Posterior vena cava (tissue), 2 donors: ENCODE measurements at regions of chrX and their contacts with region 1.

Region 1: GRCh38 chrX:77597090-77597489 is 149.9 kb downstream of the FGF16 start:
- DNase-seq: no peak

Region 2: DNA sequence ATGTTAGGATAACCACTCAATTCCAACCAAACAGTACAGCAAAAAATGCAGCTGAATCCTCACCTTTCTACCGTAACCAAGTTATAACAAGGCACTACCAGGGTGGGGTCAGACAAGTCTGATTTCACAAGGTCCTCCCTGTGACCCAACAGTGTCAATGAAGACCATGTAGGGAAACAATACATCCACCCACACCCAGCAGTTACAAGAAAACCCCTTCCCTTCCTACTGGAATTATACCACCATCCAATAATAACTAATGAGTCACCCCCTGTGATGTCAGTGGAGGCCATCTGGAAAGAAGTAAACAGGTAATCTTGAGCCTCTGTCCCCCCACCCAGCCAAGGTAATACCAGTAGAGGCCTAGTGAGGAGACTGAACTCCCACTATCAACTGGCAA is 32.3 kb before region 1 on chrX:
- intact Hi-C with region 1: no loop called
- DNase-seq: no peak

Region 3: DNA sequence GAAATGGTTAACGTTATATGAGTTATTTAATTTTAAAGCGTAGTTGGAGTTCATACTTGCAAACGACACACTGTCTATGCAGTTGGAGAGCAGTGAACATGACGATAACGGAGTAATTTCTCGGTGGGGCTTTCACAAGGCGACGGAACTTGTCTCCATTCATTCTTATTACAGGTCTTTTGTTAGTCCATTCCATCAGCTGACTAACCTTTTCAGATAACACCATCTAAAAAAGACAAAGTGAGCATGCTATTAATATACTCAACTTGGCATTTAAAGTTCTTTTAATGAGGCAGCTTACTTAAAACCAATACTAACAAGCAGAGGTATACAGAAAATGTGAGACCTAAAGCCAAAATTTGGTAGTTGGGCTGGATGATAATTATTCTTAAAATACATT is 278.3 kb after region 1 on chrX:
- intact Hi-C with region 1: loop called in 1 of 2 experiments (anchors 5 kb)
- DNase-seq: no peak

Region 4: DNA sequence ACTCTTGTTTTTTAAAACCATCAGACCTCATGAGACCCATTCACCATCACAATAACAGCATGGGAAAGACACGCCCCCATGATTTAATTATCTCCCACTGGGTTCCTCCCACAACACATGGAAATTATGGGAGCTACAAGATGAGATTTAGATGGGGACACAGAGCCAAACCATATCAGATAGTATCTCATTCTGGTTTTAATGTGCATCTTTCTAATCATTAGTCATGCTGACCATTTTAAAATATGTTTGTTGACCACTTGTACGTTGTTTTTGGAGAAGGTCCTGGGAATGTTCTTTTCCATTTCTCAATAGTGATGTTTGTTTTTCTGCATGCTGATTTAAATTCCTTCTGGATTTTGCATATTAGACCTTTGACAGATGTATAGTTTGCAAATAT is 943.1 kb after region 1 on chrX:
- intact Hi-C with region 1: loop called in 1 of 2 experiments (anchors 5 kb)
- DNase-seq: no peak